ENCODE measurements at regions of chr14 and their contacts with region 1.

Region 1: DNA sequence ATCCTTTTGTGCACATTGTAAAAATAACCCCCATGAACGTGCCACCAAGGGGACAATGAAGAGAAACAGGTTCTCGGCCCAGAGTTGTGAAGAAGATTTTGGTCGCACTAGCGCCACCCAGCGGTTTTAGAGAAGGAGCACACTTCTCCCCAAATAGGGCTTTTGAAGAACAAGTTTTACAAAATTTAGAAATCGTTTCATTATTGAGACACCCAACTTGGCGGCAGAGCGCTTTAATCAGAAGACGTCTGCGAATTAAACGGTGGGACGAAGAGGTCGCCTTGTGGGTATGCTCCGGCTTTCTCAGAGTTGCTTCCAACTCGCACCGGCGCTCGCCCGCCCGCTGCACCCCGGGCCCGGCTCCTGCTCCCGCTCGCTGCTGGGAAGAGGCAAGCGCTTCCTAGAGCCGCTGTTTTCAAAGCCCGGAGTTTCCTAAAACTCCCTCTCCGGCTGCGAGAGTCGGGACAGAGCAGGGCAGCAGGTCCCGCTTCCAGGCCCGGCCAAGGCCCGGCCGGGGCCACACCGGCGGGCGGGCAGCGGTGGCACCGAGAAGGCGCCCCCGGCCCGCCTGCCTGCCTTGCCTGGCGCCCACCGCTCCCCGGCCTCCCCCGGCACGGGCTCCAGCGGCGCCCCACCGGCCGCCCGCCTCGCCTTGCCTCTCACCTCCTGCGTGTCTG is 673 bp downstream of the FOXA1 start:
- DNase-seq: peak; percentile 71 to 80 (median 78)
- ATAC-seq: peak; percentile 67
- H3K4me3 ChIP-seq: peak overlapping the region in 1 of 2 donors; percentile 26
- H3K27ac ChIP-seq: peak overlapping the region in 2 of 4 donors; percentile 51 to 67
- H3K4me1 ChIP-seq: peaks cover 34% of the 10 kb centered on the region
- H3K27me3 ChIP-seq: peaks cover 11 to 37% of the 10 kb centered on the region in 2 donors
- CTCF ChIP-seq: peak; percentile 46 to 85 (median 74)
- POLR2A ChIP-seq: peak in 1 of 3 donors; percentile 1

Region 2: GRCh38 chr14:37246427-37246914 is 347.9 kb before region 1 on chr14:
- intact Hi-C with region 1: loop called (anchors 10 kb)
- DNase-seq: peak in 1 of 4 donors; percentile 21
- ATAC-seq: peak; percentile 56
- H3K4me3 ChIP-seq: no peak overlapping the region
- H3K27ac ChIP-seq: no peak overlapping the region
- H3K4me1 ChIP-seq: no peaks in the 10 kb centered on the region
- H3K27me3 ChIP-seq: no peaks in the 10 kb centered on the region
- CTCF ChIP-seq: peak; percentile 66 to 85 (median 74)
- POLR2A ChIP-seq: no peak

Measured in body of pancreas (tissue), 4 donors.